Natural killer cell (primary cell): ENCODE measurements at regions of chr6 and their contacts with region 1.

Region 1: GRCh38 chr6:142474531-142475289 is 172.9 kb downstream of the ADGRG6 start:
- DNase-seq: peak in 1 of 2 donors; percentile 73
- ATAC-seq: peak in 2 of 3 donors; percentile 52 to 70
- H3K4me3 ChIP-seq: no peak overlapping the region
- H3K4me3 Mint-ChIP-seq: no peak overlapping the region
- H3K27ac ChIP-seq: no peak overlapping the region
- H3K27ac Mint-ChIP-seq: no peak overlapping the region
- H3K4me1 ChIP-seq: no peaks in the 10 kb centered on the region
- H3K4me1 Mint-ChIP-seq: peaks cover 6% of the 10 kb centered on the region in 2 donors
- H3K27me3 ChIP-seq: peaks cover 2% of the 10 kb centered on the region
- H3K27me3 Mint-ChIP-seq: peaks cover 5 to 8% of the 10 kb centered on the region in 2 donors
- CTCF ChIP-seq: peak; percentile 89

Region 2: DNA sequence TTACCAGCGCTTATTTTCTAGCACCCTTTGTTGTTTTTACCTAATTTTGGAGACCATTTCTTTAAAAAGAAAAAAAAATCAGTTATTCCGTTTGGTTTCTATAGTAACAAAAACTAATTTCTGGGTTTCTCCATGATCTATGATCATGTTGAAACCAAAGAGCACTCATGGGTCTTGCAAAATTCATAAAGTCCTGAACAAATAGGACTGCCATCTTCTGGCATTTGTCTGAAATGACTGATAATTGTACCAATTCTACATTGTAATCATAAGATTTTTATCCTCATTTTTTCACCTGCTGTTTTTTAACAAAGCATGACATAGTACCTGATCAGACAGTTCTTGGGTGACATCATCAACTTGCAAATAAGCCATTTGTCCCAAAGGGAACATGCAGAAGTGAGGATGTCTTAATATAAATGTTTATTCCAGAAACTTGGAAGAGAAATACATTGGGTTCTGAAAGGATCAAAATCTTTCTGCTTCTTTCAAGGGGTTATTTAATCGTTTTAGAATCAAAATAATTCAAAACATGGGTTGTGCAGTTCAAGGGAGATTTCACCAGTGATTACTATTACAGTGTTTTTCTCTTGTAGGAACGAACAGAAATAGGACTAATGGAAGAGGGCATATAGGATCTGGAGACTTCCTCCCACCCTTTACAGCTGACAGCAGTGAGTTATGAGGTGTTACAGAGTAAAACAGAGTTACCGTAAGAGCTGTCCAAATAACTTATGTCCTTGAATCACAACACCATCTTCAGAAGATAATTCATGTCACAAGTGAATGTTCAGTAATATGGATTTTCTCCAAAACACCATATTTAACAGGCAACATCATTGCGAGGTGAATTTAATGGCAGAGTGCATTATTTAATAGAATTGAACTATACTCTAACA is 429.1 kb before region 1 on chr6:
- intact Hi-C with region 1: no loop called
- DNase-seq: no peak
- ATAC-seq: no peak
- H3K4me3 ChIP-seq: no peak overlapping the region
- H3K4me3 Mint-ChIP-seq: no peak overlapping the region
- H3K27ac ChIP-seq: no peak overlapping the region
- H3K27ac Mint-ChIP-seq: no peak overlapping the region
- H3K4me1 ChIP-seq: no peaks in the 10 kb centered on the region
- H3K4me1 Mint-ChIP-seq: no peaks in the 10 kb centered on the region
- H3K27me3 ChIP-seq: no peaks in the 10 kb centered on the region
- H3K27me3 Mint-ChIP-seq: no peaks in the 10 kb centered on the region
- CTCF ChIP-seq: no peak

Region 3: GRCh38 chr6:142592876-142593275 is 118.2 kb after region 1 on chr6:
- intact Hi-C with region 1: no loop called
- DNase-seq: no peak
- ATAC-seq: no peak
- H3K4me3 ChIP-seq: no peak overlapping the region
- H3K4me3 Mint-ChIP-seq: no peak overlapping the region
- H3K27ac ChIP-seq: no peak overlapping the region
- H3K27ac Mint-ChIP-seq: no peak overlapping the region
- H3K4me1 ChIP-seq: no peaks in the 10 kb centered on the region
- H3K4me1 Mint-ChIP-seq: no peaks in the 10 kb centered on the region
- H3K27me3 ChIP-seq: no peaks in the 10 kb centered on the region
- H3K27me3 Mint-ChIP-seq: peaks cover 7 to 15% of the 10 kb centered on the region in 2 donors
- CTCF ChIP-seq: no peak

Region 4: DNA sequence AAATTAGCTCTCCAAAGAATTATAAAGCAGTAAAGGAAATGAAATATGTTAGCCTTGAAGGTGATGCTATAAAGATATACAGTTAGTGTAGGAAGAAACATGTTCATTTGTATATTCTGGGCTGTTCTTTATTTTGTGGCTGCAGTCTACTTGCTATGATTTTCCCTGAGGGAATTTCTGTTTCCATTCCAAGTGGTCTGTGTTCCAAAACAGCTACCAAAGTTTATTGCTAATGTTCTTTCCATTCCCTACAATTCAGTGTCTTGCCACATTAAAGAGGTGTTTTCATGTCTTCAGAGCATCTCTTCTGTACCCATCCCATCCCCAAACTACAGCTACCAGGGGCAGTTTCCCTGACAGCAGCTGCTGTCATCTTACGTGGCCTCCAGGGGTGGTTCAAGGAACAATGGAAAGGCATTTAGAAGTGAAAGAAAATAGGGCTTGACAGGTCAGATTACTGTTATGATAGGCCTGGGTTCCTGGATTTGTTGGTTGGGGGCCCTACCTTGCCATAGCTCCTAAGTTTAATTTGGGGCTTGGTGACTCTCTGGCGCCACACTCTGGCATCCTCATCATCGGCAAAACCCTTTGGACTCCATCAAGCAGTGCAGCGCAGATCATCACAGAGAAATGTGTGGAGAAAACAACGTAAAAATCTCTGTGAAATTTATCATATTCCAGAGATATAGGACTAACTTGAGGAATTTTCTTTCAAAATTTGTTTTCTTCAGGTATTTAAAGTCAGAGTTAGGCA is 552.2 kb after region 1 on chr6:
- intact Hi-C with region 1: loop called (anchors 5 kb)
- DNase-seq: peak; percentile 31 to 74
- ATAC-seq: peak; percentile 61 to 73 (median 69)
- H3K4me3 ChIP-seq: no peak overlapping the region
- H3K4me3 Mint-ChIP-seq: no peak overlapping the region
- H3K27ac ChIP-seq: no peak overlapping the region
- H3K27ac Mint-ChIP-seq: no peak overlapping the region
- H3K4me1 ChIP-seq: no peaks in the 10 kb centered on the region
- H3K4me1 Mint-ChIP-seq: no peaks in the 10 kb centered on the region
- H3K27me3 ChIP-seq: no peaks in the 10 kb centered on the region
- H3K27me3 Mint-ChIP-seq: peaks cover 1 to 4% of the 10 kb centered on the region in 2 donors
- CTCF ChIP-seq: peak; percentile 70